ENCODE measurements at regions of chr1 and their contacts with region 1.

Region 1: DNA sequence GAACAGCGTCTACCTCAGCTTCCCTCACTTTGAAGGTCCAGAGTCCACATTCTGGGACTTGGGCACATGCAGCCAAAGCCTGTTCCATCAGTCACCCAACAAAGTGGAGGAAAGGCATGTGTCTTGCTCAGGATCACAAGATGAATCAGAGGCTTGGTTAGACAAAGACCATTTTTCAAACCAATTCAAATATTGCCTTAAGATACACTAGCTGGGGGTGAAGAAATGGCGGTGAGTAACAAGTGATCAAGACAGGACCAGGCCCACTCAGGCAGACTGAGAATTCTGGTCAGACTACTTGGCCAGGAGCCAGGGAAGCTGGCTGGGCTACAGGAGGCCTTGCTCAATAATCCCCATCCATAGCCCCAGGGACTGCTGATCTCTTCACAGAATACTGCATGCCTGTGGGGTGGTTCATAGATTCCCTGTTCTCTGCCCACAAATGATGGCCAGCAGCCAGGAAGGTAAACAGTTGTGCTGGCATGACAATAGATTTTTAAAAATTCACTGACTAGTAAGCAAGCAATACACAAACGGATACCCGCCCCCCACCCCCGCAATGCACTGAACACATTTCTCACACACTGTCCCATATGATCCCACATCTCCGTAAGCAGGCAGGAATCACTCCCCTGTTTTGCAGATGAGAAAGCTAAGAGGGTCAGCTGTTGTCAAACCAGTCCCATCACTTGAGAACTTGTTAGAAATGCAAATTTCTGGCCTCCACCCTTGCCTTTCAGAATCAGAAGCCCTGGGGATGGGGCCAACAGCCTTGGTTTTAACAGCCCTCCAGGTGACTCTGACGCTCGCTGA is 27.2 kb downstream of the ERI3 start:
- DNase-seq: peak; percentile 100
- H3K4me3 Mint-ChIP-seq: no peak overlapping the region
- H3K27ac Mint-ChIP-seq: peak overlapping the region; percentile 82
- H3K4me1 Mint-ChIP-seq: peaks cover 61% of the 10 kb centered on the region
- H3K27me3 Mint-ChIP-seq: no peaks in the 10 kb centered on the region
- CTCF ChIP-seq: no peak

Region 2: GRCh38 chr1:44089371-44090049 is 238.4 kb before region 1 on chr1:
- CTCF ChIA-PET with region 1: interaction called, 4 read pairs
- POLR2A ChIA-PET with region 1: no interaction called
- intact Hi-C with region 1: loop called (anchors 10 kb)
- DNase-seq: peak; percentile 54
- H3K4me3 Mint-ChIP-seq: no peak overlapping the region
- H3K27ac Mint-ChIP-seq: no peak overlapping the region
- H3K4me1 Mint-ChIP-seq: peaks cover 12% of the 10 kb centered on the region
- H3K27me3 Mint-ChIP-seq: no peaks in the 10 kb centered on the region
- CTCF ChIP-seq: no peak

Region 3: GRCh38 chr1:44339731-44340130 is 11.8 kb after region 1 on chr1:
- CTCF ChIA-PET with region 1: interaction called, 4 read pairs
- POLR2A ChIA-PET with region 1: interaction called, 41 read pairs
- intact Hi-C with region 1: no loop called
- DNase-seq: no peak
- H3K4me3 Mint-ChIP-seq: no peak overlapping the region
- H3K27ac Mint-ChIP-seq: no peak overlapping the region
- H3K4me1 Mint-ChIP-seq: peaks cover 11% of the 10 kb centered on the region
- H3K27me3 Mint-ChIP-seq: no peaks in the 10 kb centered on the region
- CTCF ChIP-seq: no peak

Region 4: DNA sequence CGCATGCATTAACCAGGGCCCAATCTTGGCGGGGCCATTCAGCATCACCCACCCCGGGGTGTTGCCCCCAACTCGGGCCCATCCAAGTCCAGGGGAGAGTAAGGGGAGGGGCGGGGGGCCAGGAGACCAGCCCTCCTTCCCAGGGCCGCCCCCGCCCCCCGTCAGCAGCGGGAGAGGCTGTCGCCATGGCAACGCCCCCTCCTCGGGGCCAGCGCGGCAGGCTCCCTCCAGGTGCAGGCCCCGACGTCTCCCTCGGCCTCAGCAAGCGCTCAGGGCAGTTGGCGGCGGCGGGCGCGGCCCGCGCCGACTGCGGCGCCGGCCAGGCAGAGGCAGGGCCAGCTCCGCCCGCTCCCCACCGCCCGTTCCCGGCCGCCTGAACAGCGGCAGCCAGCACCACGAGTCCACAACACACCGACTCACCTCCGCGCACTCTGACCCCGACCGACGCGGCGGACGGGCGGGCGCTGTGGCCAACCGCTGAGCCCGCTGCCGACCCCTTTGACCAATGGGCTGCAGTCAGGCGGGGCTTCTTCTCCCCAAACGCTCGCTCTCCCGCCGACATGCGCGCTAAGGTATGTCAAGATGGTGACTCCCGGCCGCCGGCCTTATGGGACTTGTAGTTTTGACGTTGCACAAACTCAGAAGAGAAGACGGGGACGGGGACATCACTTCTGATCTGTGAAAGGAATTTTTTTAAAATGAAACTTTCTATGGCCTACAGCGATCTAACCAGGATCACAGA is 27.1 kb after region 1 on chr1 and contains the start of gene ERI3:
- CTCF ChIA-PET with region 1: interaction called, 4 read pairs
- POLR2A ChIA-PET with region 1: interaction called, 56 read pairs
- intact Hi-C with region 1: no loop called
- DNase-seq: peak; percentile 98
- H3K4me3 Mint-ChIP-seq: peak within 1 kb of the TSS; percentile 89
- H3K27ac Mint-ChIP-seq: peak within 1 kb of the TSS; percentile 92
- H3K4me1 Mint-ChIP-seq: peaks cover 34% of the 10 kb centered on the region
- H3K27me3 Mint-ChIP-seq: no peaks in the 10 kb centered on the region
- CTCF ChIP-seq: no peak
- total RNA-seq, gene ERI3: 70.5 and 83.4 TPM in 2 replicates

Region 5: GRCh38 chr1:44485229-44485933 is 157.5 kb after region 1 on chr1:
- CTCF ChIA-PET with region 1: no interaction called
- POLR2A ChIA-PET with region 1: interaction called, 13 read pairs
- intact Hi-C with region 1: no loop called
- DNase-seq: peak; percentile 83
- H3K4me3 Mint-ChIP-seq: peak overlapping the region; percentile 28
- H3K27ac Mint-ChIP-seq: peak overlapping the region; percentile 86
- H3K4me1 Mint-ChIP-seq: peaks cover 40% of the 10 kb centered on the region
- H3K27me3 Mint-ChIP-seq: no peaks in the 10 kb centered on the region
- CTCF ChIP-seq: no peak

Region 6: GRCh38 chr1:44714944-44715571 is 387.2 kb after region 1 on chr1:
- CTCF ChIA-PET with region 1: no interaction called
- POLR2A ChIA-PET with region 1: no interaction called
- intact Hi-C with region 1: no loop called
- DNase-seq: peak; percentile 77
- H3K4me3 Mint-ChIP-seq: no peak overlapping the region
- H3K27ac Mint-ChIP-seq: no peak overlapping the region
- H3K4me1 Mint-ChIP-seq: peaks cover 7% of the 10 kb centered on the region
- H3K27me3 Mint-ChIP-seq: peaks cover 14% of the 10 kb centered on the region
- CTCF ChIP-seq: peak; percentile 84